Activated CD4-positive, alpha-beta memory T cell treated with anti-CD3 and anti-CD28 coated beads for 36 hours (primary cell): ENCODE measurements at regions of chr10 and their contacts with region 1.

Region 1: GRCh38 chr10:71696628-71697326 is 22.8 kb downstream of the C10orf105 start:
- DNase-seq: peak; percentile 75
- H3K4me3 Mint-ChIP-seq: no peak overlapping the region
- H3K27ac Mint-ChIP-seq: no peak overlapping the region
- H3K4me1 Mint-ChIP-seq: peaks cover 41% of the 10 kb centered on the region
- H3K27me3 Mint-ChIP-seq: no peaks in the 10 kb centered on the region

Region 2: DNA sequence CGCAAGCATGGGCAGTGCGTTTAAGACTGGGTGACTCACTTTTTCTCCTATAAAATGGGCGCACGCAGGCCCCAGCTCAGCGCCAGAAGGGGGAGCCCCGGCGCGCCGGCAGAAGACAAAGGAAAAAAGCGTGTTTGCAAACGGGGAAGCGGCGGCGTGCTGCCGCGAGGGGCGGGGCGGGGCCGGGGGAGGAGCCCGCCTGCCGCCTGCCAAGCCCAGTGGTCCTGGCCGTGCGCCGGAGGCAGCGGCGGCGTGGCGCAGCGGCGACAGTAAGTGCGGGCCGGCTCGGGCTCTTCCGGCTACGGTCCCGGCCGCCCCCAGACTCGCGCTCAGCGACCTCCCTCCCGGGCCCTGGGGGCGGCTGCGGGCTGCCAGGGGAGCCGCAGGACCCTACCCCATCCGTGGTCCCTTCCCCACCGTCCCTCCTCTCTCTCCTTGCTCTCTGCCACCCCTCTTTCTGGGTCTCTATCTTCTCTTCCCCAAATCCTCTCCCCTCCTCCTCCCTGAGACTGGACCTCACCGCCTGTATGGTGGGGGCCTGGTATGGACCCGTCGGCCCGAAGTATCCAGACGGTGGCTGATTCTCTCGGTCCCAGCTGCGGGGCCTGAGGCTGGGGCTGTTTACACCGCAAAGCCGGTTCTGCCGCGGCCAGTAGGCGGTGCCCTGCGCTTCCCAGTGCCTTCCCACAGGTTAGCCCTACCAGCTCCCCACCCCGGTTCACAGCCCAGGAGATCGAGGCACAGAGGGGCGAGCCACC is 377.6 kb before region 1 on chr10 and contains the start of gene SLC29A3:
- CTCF ChIA-PET with region 1: interaction called, 39 read pairs
- POLR2A ChIA-PET with region 1: interaction called, 3 read pairs
- intact Hi-C with region 1: no loop called
- DNase-seq: peak; percentile 93
- H3K4me3 Mint-ChIP-seq: peak within 1 kb of the TSS; percentile 90
- H3K27ac Mint-ChIP-seq: peak within 1 kb of the TSS; percentile 46
- H3K4me1 Mint-ChIP-seq: peaks cover 23% of the 10 kb centered on the region
- H3K27me3 Mint-ChIP-seq: no peaks in the 10 kb centered on the region
- total RNA-seq, gene SLC29A3: 2.5 to 3.0 TPM

Region 3: DNA sequence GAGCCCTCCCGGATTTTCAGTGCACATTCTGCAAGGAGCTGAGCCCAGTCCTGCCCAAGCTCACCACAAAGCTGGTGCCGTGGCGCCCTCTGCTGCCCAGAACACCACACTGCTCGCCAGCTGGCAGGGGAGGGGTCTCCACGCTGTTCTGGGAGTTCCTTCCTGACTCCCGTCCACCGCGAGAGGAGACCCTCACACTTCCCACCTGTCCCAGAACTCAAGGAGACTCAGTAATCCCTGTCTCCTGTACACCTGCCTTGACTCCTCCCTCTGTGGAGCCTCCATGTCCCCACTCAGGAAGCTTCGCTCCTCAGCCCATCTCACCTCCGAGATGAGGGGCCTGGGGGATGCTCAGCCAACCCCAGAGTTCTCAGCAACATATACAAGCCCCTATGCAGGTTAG is 11.5 kb after region 1 on chr10:
- CTCF ChIA-PET with region 1: interaction called, 131 read pairs
- POLR2A ChIA-PET with region 1: interaction called, 3 read pairs
- intact Hi-C with region 1: loop called (anchors 2 kb)
- DNase-seq: peak; percentile 78
- H3K4me3 Mint-ChIP-seq: no peak overlapping the region
- H3K27ac Mint-ChIP-seq: no peak overlapping the region
- H3K4me1 Mint-ChIP-seq: peaks cover 35% of the 10 kb centered on the region
- H3K27me3 Mint-ChIP-seq: no peaks in the 10 kb centered on the region

Region 4: GRCh38 chr10:71727738-71728737 is 31.3 kb after region 1 on chr10:
- CTCF ChIA-PET with region 1: interaction called, 34 read pairs
- POLR2A ChIA-PET with region 1: no interaction called
- intact Hi-C with region 1: no loop called
- DNase-seq: peak; percentile 87
- H3K4me3 Mint-ChIP-seq: peak overlapping the region; percentile 58
- H3K27ac Mint-ChIP-seq: peak overlapping the region; percentile 99
- H3K4me1 Mint-ChIP-seq: peaks cover 95% of the 10 kb centered on the region
- H3K27me3 Mint-ChIP-seq: no peaks in the 10 kb centered on the region

Region 5: GRCh38 chr10:71748671-71749191 is 52.0 kb after region 1 on chr10:
- CTCF ChIA-PET with region 1: interaction called, 12 read pairs
- POLR2A ChIA-PET with region 1: no interaction called
- intact Hi-C with region 1: no loop called
- DNase-seq: peak; percentile 91
- H3K4me3 Mint-ChIP-seq: peak overlapping the region; percentile 73
- H3K27ac Mint-ChIP-seq: peak overlapping the region; percentile 98
- H3K4me1 Mint-ChIP-seq: peaks cover 97% of the 10 kb centered on the region
- H3K27me3 Mint-ChIP-seq: no peaks in the 10 kb centered on the region

Region 6: GRCh38 chr10:71766702-71767419 is 70.1 kb after region 1 on chr10:
- CTCF ChIA-PET with region 1: interaction called, 100 read pairs
- POLR2A ChIA-PET with region 1: no interaction called
- intact Hi-C with region 1: loop called (anchors 2 kb)
- DNase-seq: peak; percentile 65
- H3K4me3 Mint-ChIP-seq: peak overlapping the region; percentile 38
- H3K27ac Mint-ChIP-seq: peak overlapping the region; percentile 96
- H3K4me1 Mint-ChIP-seq: peaks cover 93% of the 10 kb centered on the region
- H3K27me3 Mint-ChIP-seq: no peaks in the 10 kb centered on the region

Region 7: DNA sequence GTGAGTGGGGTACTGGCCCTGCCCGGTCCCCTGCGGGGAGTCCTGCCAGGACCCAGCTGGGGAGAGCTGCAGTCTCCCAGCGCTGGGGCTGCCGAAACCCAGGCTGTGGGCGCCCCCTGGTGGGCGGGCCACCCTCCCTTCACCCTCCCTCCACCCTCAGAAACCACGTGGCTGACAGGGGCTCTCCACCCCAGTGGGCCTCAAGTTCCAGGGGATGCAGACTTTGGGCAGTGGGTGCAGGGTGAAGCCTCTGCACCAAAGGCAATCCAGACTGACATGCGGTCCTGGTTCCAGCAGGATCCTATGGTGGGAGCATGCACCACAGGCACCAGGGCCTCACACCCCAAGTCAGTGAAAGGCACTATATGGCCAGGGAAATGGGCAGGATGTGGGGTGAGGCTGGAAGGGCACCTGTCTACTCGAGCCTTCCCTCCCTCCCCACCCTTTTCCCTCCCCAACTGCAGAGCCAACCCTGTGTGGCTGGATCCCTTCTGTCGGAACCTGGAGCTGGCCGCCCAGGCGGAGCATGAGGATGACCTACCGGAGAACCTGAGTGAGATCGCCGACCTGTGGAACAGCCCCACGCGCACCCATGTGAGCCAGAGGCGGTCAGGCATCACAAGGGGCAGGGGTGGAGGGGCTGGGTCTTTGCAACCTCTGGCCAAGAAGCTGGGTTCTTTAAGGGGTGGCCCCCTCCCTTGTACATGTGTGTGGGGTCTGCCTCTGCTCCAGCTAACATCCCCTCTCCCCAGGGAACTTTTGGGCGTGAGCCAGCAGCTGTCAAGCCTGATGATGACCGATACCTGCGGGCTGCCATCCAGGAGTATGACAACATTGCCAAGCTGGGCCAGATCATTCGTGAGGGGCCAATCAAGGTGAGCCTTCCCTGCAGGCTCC is 115.5 kb after region 1 on chr10:
- CTCF ChIA-PET with region 1: interaction called, 28 read pairs
- POLR2A ChIA-PET with region 1: no interaction called
- intact Hi-C with region 1: loop called (anchors 5 kb)
- DNase-seq: peak; percentile 83
- H3K4me3 Mint-ChIP-seq: no peak overlapping the region
- H3K27ac Mint-ChIP-seq: no peak overlapping the region
- H3K4me1 Mint-ChIP-seq: no peaks in the 10 kb centered on the region
- H3K27me3 Mint-ChIP-seq: no peaks in the 10 kb centered on the region